Mammary epithelial cell (primary cell): ENCODE measurements at regions of chr19 and their contacts with region 1.

Region 1: DNA sequence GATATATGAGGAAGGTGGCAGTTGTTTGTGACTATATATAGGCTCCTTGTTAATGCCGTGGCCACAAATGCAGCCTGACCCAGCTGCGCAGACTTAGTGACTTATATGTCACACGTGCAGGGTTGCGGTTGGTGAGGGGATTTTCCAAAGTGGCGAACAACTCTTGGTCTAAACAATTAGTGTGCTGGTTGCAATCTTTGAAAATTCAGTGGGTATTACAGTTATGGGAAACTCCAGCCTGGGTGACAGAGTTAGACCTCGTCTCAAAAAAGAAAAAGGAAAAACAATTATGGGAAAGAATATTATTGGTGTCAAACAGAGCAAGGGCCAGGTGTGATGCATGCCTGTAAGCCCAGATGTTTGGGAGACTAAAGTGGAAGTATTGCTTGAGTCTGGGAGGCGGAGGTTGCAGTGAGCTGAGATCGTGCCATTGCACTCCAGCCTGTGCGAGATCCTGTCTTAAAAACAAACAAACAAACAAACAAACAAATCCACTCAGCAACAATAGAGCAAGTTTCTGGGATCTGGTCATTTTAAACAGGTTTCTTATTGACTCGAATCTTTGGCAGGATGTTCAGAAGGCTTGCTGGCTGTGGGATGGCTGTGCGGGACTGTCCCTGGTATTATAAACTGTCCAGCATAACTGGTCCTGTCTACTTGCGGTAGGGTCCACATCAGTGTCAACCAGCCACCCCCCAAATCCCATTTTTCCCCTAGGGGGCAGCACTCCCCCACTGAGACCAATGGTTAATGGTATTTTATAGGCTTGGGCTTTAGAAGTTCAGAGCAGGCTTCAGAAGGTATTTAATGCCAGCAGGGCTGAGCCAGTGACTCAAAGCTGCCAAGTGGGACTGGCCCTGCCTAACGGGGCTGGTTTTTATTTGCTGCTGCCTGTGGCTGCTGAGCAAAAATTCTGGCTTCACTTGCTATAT is 15.4 kb downstream of the RELB start:
- DNase-seq: peak; percentile 67
- H3K4me3 ChIP-seq: no peak overlapping the region
- H3K27ac ChIP-seq: no peak overlapping the region
- H3K4me1 ChIP-seq: no peaks in the 10 kb centered on the region
- H3K27me3 ChIP-seq: no peaks in the 10 kb centered on the region
- CTCF ChIP-seq: peak; percentile 63

Region 2: GRCh38 chr19:44987148-44987675 is 29.4 kb before region 1 on chr19:
- CTCF ChIA-PET with region 1: no interaction called
- dilution Hi-C with region 1: no loop called
- in situ Hi-C with region 1: no loop called
- intact Hi-C with region 1: no loop called
- DNase-seq: no peak
- H3K4me3 ChIP-seq: no peak overlapping the region
- H3K27ac ChIP-seq: no peak overlapping the region
- H3K4me1 ChIP-seq: no peaks in the 10 kb centered on the region
- H3K27me3 ChIP-seq: no peaks in the 10 kb centered on the region
- CTCF ChIP-seq: no peak

Region 3: GRCh38 chr19:45097776-45098520 is 81.3 kb after region 1 on chr19:
- CTCF ChIA-PET with region 1: no interaction called
- dilution Hi-C with region 1: no loop called
- in situ Hi-C with region 1: no loop called
- intact Hi-C with region 1: no loop called
- DNase-seq: peak; percentile 86
- H3K4me3 ChIP-seq: no peak overlapping the region
- H3K27ac ChIP-seq: no peak overlapping the region
- H3K4me1 ChIP-seq: peaks cover 41% of the 10 kb centered on the region
- H3K27me3 ChIP-seq: no peaks in the 10 kb centered on the region
- CTCF ChIP-seq: no peak

Region 4: GRCh38 chr19:45125926-45126493 is 109.4 kb after region 1 on chr19:
- CTCF ChIA-PET with region 1: no interaction called
- dilution Hi-C with region 1: no loop called
- in situ Hi-C with region 1: no loop called
- intact Hi-C with region 1: loop called (anchors 2 kb)
- DNase-seq: peak; percentile 39
- H3K4me3 ChIP-seq: no peak overlapping the region
- H3K27ac ChIP-seq: no peak overlapping the region
- H3K4me1 ChIP-seq: peaks cover 20% of the 10 kb centered on the region
- H3K27me3 ChIP-seq: no peaks in the 10 kb centered on the region
- CTCF ChIP-seq: peak; percentile 79 to 88

Region 5: GRCh38 chr19:45187421-45188100 is 170.9 kb after region 1 on chr19:
- CTCF ChIA-PET with region 1: no interaction called
- dilution Hi-C with region 1: no loop called
- in situ Hi-C with region 1: no loop called
- intact Hi-C with region 1: loop called (anchors 2 kb)
- DNase-seq: no peak
- H3K4me3 ChIP-seq: no peak overlapping the region
- H3K27ac ChIP-seq: no peak overlapping the region
- H3K4me1 ChIP-seq: peaks cover 8% of the 10 kb centered on the region
- H3K27me3 ChIP-seq: no peaks in the 10 kb centered on the region
- CTCF ChIP-seq: peak; percentile 57 to 59